ENCODE measurements at regions of chr2 and their contacts with region 1.

Region 1: DNA sequence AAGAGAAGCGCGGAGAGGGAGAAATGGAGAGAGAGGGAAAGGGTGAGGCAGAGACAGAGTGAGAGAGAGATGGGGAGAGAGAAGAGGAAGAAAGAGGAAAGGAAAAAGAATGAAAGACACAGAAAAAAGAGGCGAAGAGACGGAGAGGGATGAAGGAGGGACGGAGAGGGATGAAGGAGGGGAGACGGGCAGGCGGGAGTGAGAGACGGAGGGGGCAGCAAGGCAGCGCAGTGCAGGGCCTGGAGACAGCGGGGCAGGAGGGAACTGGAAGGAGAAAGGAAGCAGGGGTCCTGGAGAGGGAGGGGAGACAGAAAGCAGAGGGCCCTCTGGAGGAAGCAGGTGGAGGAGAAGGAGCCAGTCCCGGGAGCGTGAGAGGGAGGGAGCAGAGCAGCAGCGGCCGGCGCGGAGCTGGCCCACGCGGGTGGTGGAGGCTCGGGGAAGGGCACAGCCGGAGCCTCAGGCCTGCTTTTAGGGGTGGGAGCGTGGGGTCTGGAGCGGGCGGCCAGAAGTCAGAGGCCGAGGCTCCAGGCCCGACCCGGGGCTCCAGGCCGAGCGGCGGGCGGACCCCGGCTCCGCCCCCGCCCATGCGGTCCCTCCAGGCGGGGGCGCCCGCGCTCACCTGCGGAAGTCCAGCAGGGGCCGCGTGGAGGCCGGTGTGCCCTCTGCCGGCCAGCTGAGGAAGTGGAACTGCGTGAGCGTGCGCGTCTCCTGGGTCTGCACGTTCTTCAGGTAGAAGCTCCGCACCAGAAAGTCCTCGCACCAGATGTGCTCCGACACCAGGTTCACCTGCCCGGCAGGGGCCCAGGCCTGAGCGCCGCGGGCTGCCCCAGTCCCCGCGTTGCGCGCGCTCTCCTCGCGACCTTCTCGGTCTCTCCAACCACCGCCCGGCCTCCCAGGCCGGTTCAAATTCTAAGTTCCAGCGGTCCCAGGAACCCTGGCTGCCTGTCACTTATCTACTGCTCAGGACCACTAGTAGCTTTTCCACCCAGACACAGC is 14.5 kb downstream of the PTPRN start:
- DNase-seq: peak; percentile 91
- ATAC-seq: peak; percentile 95
- H3K4me3 Mint-ChIP-seq: peak overlapping the region; percentile 78
- H3K27ac Mint-ChIP-seq: peak overlapping the region; percentile 65
- H3K4me1 Mint-ChIP-seq: peaks cover 24% of the 10 kb centered on the region
- H3K27me3 Mint-ChIP-seq: peaks cover 6% of the 10 kb centered on the region
- CTCF ChIP-seq: peak; percentile 64

Region 2: DNA sequence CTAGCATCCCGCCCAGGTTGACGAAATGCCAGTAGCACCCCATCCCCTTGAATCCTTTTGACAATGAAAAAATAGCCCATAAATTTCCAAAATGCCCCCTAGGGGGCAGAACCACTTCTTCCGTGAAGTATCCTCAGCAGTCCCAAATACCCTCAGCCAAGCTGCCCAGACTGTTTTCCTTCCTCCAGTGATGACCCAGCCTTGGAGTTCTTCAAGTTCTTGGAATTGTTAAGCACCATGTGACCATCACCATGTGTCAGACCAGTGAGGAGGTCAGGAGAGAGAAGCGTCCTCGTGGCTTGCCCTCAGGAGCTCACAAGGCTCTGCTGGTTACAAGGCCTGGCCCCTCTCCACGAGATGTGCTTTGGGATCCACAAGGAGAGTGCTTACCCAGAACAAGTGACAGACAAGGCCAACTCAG is 123.4 kb before region 1 on chr2:
- CTCF ChIA-PET with region 1: interaction called, 33 read pairs
- POLR2A ChIA-PET with region 1: interaction called, 36 read pairs
- intact Hi-C with region 1: loop called (anchors 1 kb)
- DNase-seq: no peak
- ATAC-seq: peak; percentile 40
- H3K4me3 Mint-ChIP-seq: no peak overlapping the region
- H3K27ac Mint-ChIP-seq: no peak overlapping the region
- H3K4me1 Mint-ChIP-seq: peaks cover 21% of the 10 kb centered on the region
- H3K27me3 Mint-ChIP-seq: no peaks in the 10 kb centered on the region
- CTCF ChIP-seq: no peak

Region 3: DNA sequence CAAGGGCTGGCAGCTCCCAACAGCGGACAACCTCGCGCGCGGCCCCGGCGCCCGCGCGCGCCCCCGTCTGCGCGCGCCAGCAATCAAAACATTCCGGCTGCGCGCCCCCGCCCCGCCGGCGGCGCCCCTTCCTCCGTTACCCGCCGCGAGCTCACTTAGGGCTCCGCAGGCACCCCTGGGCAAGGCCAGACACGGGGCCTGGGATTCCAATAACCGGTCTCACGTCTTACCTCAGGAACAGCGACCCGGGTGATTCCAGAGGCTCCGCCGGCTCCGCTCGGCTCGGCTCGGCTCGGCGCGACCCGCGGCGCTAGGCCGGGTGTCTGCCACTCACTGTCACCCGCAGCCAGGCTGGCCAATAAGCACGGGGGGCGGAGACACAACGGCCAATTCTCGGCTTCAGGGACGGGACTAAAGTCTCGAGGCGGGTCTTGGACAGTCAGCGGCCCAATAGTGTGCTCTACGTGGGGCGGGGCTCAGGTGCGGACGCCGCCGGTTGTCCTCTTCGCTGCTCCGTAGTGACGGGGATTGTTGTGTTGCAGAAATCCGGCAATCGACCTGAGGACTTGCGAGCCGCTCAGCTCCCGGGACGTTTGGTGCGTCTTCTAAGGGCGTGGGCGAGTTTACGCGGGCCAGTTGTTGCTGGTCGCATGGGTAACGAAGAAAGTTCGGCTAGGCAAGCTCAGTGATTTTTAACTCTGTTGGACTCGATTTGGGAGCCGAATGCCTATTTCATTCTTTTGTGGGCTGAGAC is 65.2 kb before region 1 on chr2 and contains the starts of genes ANKZF1 and ATG9A:
- CTCF ChIA-PET with region 1: interaction called, 19 read pairs
- POLR2A ChIA-PET with region 1: interaction called, 20 read pairs
- intact Hi-C with region 1: loop called (anchors 1 kb)
- DNase-seq: peak; percentile 90
- ATAC-seq: peak; percentile 97
- H3K4me3 Mint-ChIP-seq: peak within 1 kb of the TSS; percentile 96
- H3K27ac Mint-ChIP-seq: peak within 1 kb of the TSS; percentile 95
- H3K4me1 Mint-ChIP-seq: peaks cover 43% of the 10 kb centered on the region
- H3K27me3 Mint-ChIP-seq: no peaks in the 10 kb centered on the region
- CTCF ChIP-seq: no peak
- total RNA-seq, gene ANKZF1: 96.0 and 105 TPM in 2 replicates
- total RNA-seq, gene ATG9A: 28.3 and 38.3 TPM in 2 replicates

Region 4: DNA sequence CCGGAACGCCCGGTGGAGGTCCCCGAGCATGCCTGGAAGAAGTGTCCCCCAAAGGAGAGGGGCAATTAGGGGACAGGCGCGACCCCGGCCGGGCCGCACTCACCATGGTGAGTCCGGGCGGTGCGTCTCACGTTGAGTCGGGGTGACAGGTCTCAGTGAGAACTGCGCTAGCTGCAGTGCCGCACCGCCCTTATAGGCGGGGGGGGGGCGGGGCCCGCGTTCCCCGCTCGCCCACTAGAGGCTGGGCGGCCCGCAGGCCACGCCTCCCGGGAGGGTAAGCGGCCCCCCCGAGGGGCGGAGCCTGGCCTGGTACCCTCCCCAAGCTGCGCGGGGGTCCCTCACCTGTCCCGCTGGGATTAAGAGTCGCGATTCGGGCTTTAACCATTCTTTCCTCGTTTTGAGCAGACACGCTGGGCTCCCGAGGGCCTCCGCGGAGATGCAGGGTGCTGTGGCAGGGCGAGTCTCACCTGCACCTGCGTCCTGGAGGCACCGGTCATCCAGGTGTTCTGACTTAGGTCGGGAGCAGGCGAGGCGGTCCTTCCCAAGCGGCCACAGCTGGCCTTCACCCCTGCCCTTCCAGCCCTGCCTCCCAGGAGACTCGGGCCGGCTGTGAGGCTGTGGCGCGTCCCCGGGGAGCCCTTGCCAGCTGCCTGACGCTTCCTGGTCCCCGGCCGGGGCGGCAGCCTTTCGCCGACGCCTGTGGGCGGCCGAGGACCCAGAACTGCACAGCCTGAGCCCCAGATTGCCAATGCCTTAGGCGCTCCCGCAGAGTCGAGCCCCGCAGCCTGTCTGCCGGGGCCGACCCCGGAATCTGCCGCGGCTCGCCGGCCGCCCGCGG is 40.7 kb before region 1 on chr2 and contains the start of gene TUBA4A:
- CTCF ChIA-PET with region 1: interaction called, 34 read pairs
- POLR2A ChIA-PET with region 1: interaction called, 86 read pairs
- intact Hi-C with region 1: loop called (anchors 1 kb)
- DNase-seq: peak; percentile 90
- ATAC-seq: peak; percentile 69
- H3K4me3 Mint-ChIP-seq: peak within 1 kb of the TSS; percentile 82
- H3K27ac Mint-ChIP-seq: peak within 1 kb of the TSS; percentile 98
- H3K4me1 Mint-ChIP-seq: peaks cover 53% of the 10 kb centered on the region
- H3K27me3 Mint-ChIP-seq: no peaks in the 10 kb centered on the region
- CTCF ChIP-seq: no peak
- total RNA-seq, gene TUBA4A: 184 and 192 TPM in 2 replicates

Region 5: DNA sequence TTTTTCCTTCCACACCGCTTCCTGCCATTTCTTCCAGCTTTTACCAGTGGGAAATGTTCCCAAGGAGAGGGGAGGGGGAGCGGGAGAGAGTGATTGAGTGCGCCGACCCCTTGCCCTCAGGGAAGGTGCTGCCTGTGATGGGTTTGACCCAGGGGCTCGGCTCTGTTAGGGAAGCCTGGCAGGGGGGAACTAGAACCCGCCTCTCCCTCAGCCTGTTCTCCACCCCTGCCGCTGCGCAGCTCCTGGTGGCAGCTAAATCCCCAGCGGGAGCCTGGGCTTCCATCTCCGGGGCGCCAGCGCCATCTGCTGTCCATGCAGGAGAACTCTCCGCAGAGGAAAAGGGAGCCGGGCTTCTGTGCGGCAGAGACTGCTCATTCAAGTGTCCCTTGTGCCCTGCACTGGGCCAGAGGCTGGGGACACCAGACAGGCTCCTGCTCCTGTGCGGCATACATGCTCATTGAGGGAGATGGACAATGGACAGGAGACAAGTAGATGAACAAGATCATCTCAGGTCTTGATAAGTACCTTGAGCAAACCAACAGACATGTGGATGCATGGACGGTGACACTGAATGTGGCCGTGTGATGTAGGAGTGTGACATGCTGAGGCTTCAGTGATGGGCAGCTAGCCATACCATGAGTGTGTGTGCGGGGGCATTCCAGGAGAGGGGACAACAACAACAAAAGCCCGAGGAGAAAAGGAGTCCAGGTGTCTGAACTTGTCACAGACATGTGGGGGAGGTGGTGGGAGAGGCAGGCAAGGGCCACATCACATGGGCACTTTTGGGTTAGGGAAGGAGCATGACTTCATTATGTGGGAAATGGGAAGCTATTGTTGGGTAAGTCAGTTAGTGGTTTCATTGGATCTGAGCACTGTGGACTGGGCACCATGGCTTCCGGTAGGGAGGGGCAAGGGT is 235.7 kb after region 1 on chr2:
- CTCF ChIA-PET with region 1: no interaction called
- POLR2A ChIA-PET with region 1: no interaction called
- intact Hi-C with region 1: loop called (anchors 1 kb)
- DNase-seq: peak; percentile 73
- ATAC-seq: peak; percentile 97
- H3K4me3 Mint-ChIP-seq: no peak overlapping the region
- H3K27ac Mint-ChIP-seq: no peak overlapping the region
- H3K4me1 Mint-ChIP-seq: no peaks in the 10 kb centered on the region
- H3K27me3 Mint-ChIP-seq: peaks cover 60% of the 10 kb centered on the region
- CTCF ChIP-seq: peak; percentile 91

Region 6: DNA sequence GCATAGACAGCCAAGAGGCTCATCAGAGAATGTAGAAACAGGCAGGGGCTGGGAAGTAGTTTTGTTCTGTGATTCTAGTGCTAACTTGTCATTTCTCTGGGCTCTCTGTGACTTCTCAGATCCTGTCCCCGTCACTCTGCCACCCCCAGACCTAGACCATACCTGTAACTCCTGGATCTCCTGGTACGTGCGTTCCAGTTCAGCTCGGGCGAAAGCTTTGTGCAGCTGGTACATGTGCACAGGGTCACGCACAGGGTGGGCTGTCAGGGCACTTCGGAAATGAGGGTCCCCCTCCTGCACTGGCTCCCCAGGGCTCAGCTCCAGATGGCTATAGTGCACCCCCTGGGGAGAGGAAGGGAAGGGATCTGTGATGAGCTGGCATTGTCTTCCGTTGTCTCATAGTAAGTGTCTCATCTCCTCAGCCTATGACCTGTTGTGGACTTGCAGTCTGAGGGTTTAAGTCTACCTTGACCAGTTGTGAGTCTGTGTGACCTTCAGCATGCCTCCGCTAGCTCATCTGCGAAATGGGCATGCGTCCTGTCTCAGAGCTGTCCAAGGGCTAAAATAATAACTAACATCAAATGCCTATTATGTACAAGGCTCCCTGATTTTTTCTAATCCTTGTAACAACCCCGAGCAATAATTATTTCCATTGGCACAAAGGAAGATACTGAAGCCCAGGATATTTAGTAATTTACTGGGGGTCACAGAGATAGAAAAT is 246.3 kb after region 1 on chr2:
- CTCF ChIA-PET with region 1: no interaction called
- POLR2A ChIA-PET with region 1: no interaction called
- intact Hi-C with region 1: no loop called
- DNase-seq: no peak
- ATAC-seq: no peak
- H3K4me3 Mint-ChIP-seq: peak overlapping the region; percentile 32
- H3K27ac Mint-ChIP-seq: no peak overlapping the region
- H3K4me1 Mint-ChIP-seq: peaks cover 22% of the 10 kb centered on the region
- H3K27me3 Mint-ChIP-seq: peaks cover 28% of the 10 kb centered on the region
- CTCF ChIP-seq: no peak

Measured in activated B cell treated with CpG ODN at 0.5 μM for 24 hours (primary cell).